Activated CD4-positive, alpha-beta T cell treated with anti-CD3 and anti-CD28 coated beads for 36 hours (primary cell): ENCODE measurements at regions of chr9 and their contacts with region 1.

Region 1: GRCh38 chr9:73219985-73220626 is 68.4 kb downstream of the ANXA1 start:
- DNase-seq: peak; percentile 65
- ATAC-seq: peak; percentile 93
- H3K4me3 Mint-ChIP-seq: no peak overlapping the region
- H3K27ac Mint-ChIP-seq: peak overlapping the region; percentile 74
- H3K4me1 Mint-ChIP-seq: peaks cover 31% of the 10 kb centered on the region
- H3K27me3 Mint-ChIP-seq: peaks cover 43% of the 10 kb centered on the region

Region 2: DNA sequence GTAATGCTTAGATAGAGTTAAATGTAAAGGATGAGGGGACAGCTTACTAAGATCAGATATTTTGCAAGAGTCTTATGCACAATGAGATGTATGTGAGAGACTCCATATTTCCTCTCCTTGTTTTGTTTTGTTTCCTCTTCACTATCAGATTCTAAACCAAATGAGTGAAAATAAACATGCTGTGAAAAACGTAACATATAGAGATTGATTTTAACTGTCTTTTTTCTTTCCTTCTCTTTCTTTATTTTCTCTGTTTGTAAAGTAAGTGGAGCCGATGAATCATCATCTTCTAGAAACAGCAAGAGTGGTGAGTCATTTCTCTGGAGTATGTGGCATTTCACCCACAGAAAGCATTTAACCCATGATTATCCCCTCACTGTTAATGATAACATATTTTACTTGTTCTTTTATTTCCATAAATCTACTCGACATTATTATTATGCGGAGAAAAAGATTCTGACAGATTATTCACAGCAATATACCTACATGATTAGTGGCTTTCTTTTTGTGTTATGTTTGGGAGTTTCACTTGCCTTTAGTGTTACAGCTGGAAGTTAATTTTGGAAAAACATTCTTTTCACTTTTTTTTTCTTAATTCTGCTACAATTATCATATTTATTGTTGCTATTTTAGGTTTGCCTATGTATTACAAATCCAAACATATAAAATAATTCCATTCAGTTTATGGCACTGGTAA is 70.6 kb before region 1 on chr9:
- CTCF ChIA-PET with region 1: no interaction called
- POLR2A ChIA-PET with region 1: no interaction called
- intact Hi-C with region 1: loop called in 1 of 2 experiments (anchors 5 kb)
- DNase-seq: no peak
- ATAC-seq: peak; percentile 65
- H3K4me3 Mint-ChIP-seq: peak overlapping the region; percentile 64
- H3K27ac Mint-ChIP-seq: peak overlapping the region; percentile 81
- H3K4me1 Mint-ChIP-seq: peaks cover 61% of the 10 kb centered on the region
- H3K27me3 Mint-ChIP-seq: no peaks in the 10 kb centered on the region